ENCODE measurements at regions of chr13 and their contacts with region 1.

Region 1: DNA sequence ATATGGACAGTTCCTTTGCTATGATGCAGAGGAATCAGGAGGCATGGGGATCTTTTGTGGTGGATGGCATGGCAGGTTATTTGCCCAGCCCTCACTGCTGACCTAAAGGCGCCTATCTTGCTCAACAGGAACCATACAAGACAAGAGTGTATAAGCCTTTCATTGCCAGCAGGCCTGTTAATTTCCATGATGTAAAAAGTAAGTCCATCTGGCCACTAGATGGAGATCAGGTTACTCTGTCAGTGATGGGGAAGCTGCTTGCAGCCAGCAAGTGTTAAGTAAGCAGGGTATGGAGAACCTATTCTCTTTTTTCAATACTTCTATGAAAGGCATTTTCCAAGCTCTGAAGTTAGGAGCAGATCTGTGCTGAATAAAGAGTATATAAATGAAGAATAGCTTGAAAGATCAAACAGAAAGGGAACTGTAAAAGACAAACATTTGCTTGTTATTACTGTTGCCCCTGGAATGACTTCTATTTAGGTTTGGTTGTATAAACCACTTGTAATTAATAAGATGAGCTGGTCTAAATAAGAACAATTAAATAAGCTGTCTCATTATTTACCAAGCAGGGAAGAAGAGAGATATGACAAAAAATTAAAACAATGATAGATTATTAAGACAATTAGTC is 210.9 kb downstream of the RGCC start:
- DNase-seq: peak; percentile 93
- H3K4me3 ChIP-seq: no peak overlapping the region
- CTCF ChIP-seq: peak; percentile 78

Region 2: DNA sequence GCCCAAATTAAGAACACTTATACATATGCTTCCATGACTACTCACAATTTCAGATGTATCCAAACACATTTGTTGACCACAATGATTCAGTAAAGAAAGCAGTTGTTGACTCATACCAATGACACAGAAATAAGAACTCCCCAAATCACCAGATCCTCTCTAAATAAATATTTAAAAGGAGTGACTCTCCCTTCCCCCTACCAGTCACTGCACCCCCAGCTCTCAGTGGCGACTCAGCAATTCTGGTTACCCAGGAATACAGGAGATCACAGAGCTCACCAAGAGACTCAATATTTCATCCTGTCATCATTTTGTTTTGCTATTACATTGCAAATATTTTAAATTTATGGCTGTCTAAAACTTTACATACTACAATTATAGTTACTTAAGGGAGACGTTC is 79.3 kb before region 1 on chr13:
- in situ Hi-C with region 1: no loop called
- DNase-seq: peak; percentile 74
- H3K4me3 ChIP-seq: no peak overlapping the region
- CTCF ChIP-seq: no peak

Region 3: DNA sequence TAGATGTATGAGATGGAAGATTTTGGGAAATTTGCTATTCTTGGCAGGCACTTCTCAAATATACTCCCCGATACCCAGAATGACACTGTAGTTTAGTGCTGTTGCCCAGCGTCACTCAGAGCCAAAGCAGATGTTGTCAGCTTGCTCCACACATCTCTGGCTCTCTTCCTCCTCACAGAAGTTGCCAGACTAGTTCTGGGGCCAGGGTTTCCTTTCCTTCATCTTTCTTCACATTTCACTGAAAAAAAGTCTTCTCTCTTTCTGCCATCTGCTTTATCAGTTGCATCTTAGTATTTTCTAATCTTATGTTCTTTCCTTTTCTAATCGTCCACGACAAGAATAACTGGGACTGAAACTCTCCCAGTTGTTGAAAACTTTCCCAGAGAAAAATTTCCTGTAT is 40.5 kb after region 1 on chr13:
- in situ Hi-C with region 1: no loop called
- DNase-seq: no peak
- H3K4me3 ChIP-seq: no peak overlapping the region
- CTCF ChIP-seq: no peak

Region 4: DNA sequence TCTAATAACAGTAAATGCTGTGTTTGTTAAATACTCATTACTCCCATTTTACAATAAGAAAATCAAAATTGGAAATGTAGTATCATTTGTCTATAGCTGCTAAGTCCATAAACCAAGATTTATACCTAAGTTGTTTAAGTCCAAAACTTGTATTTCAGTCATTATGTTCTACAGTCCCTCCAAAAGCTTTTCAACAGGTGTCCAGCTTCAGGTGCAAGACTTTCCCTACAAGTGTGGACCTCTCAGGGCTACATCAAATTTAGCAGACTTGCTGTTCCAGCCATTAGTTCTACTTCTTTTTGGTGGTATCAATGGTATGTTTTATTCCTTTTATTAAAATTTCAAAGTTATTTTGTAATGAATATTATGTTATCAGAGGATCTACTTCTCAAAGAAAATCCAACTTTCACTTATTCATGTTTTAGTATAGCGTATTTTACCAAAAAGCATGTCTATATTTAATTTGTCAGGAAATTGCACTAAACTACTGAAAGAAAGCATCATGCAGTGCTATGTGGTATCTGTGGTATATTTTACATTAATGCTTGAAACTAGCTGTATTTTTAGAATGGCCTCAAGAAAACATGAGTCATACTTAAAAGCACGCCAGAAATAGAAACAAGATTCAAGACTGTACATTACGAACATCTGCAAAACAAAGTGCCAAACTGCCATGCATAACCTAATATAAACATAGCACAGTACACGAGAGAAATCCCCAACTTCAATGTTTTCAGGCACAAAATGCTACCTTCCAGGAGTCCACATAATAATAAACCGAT is 248.1 kb after region 1 on chr13:
- in situ Hi-C with region 1: loop called (anchors 10 kb)
- DNase-seq: peak; percentile 89
- H3K4me3 ChIP-seq: no peak overlapping the region
- CTCF ChIP-seq: no peak

Region 5: GRCh38 chr13:42110410-42111155 is 442.3 kb after region 1 on chr13:
- in situ Hi-C with region 1: loop called (anchors 25 kb)
- DNase-seq: peak; percentile 72
- H3K4me3 ChIP-seq: no peak overlapping the region
- CTCF ChIP-seq: peak; percentile 47

Region 6: GRCh38 chr13:42181381-42181953 is 513.2 kb after region 1 on chr13:
- in situ Hi-C with region 1: no loop called
- DNase-seq: no peak
- H3K4me3 ChIP-seq: no peak overlapping the region
- CTCF ChIP-seq: no peak